Dendritic cell treated with granulocyte-macrophage colony-stimulating factor and Interleukin-4, amounts not matched to agents 40 ng/mL and 50 ng/mL, for 4 days (primary cell): ENCODE measurements at regions of chr11 and their contacts with region 1.

Region 1: GRCh38 chr11:1202776-1203504 is 19.9 kb upstream of the MUC5B start:
- H3K4me3 Mint-ChIP-seq: no peak overlapping the region
- H3K27ac Mint-ChIP-seq: no peak overlapping the region
- H3K4me1 Mint-ChIP-seq: no peaks in the 10 kb centered on the region
- H3K27me3 Mint-ChIP-seq: no peaks in the 10 kb centered on the region

Region 2: GRCh38 chr11:1238767-1239595 is 36.0 kb after region 1 on chr11:
- intact Hi-C with region 1: no loop called
- H3K4me3 Mint-ChIP-seq: no peak overlapping the region
- H3K27ac Mint-ChIP-seq: no peak overlapping the region
- H3K4me1 Mint-ChIP-seq: no peaks in the 10 kb centered on the region
- H3K27me3 Mint-ChIP-seq: no peaks in the 10 kb centered on the region

Region 3: DNA sequence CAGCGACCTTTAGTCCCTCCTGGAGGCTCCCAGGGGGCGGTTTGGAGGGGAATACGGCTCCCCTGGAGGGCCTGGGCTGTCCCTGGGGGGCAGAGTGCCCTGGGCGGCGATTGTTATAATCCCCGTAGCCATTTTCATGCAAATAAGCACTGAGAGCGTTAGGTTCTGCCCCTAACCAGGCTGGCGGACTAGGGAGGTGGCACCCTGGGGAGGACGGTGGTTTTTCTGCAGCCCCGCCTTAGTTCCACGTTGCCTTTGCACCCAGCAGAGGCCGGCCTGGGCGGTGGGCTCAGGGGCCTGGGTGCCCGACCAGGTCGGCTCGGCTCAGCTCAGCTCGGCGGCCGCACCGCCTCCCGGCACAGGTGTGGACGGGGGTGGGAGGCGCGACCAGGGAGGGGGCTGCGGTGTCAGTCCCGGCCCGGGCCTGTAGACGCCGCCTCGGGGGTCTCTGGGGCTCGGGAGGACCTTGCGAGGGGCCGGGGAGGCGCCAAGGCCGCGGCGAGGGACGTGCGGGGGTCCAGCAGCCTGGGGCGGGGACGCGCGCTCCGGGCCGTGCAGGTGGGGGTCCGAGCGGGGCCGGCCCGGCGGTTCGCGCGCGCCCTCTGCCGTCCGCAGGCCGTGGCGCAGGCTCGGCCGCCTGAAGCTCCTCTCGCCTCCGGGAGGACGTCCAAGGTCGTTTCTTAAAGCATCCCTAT is 371.4 kb after region 1 on chr11:
- intact Hi-C with region 1: loop called (anchors 2 kb)
- H3K4me3 Mint-ChIP-seq: peak overlapping the region; percentile 8
- H3K27ac Mint-ChIP-seq: no peak overlapping the region
- H3K4me1 Mint-ChIP-seq: peaks cover 10% of the 10 kb centered on the region
- H3K27me3 Mint-ChIP-seq: peaks cover 74% of the 10 kb centered on the region